Activated CD4-positive, alpha-beta T cell treated with anti-CD3 and anti-CD28 coated beads for 36 hours (primary cell): ENCODE measurements at regions of chr6 and their contacts with region 1.

Region 1: GRCh38 chr6:158869826-158870648 is 50.9 kb upstream of the EZR start:
- DNase-seq: peak; percentile 98
- ATAC-seq: peak; percentile 90
- H3K4me3 Mint-ChIP-seq: peak overlapping the region; percentile 75
- H3K27ac Mint-ChIP-seq: peak overlapping the region; percentile 95
- H3K4me1 Mint-ChIP-seq: peaks cover 37% of the 10 kb centered on the region
- H3K27me3 Mint-ChIP-seq: no peaks in the 10 kb centered on the region

Region 2: DNA sequence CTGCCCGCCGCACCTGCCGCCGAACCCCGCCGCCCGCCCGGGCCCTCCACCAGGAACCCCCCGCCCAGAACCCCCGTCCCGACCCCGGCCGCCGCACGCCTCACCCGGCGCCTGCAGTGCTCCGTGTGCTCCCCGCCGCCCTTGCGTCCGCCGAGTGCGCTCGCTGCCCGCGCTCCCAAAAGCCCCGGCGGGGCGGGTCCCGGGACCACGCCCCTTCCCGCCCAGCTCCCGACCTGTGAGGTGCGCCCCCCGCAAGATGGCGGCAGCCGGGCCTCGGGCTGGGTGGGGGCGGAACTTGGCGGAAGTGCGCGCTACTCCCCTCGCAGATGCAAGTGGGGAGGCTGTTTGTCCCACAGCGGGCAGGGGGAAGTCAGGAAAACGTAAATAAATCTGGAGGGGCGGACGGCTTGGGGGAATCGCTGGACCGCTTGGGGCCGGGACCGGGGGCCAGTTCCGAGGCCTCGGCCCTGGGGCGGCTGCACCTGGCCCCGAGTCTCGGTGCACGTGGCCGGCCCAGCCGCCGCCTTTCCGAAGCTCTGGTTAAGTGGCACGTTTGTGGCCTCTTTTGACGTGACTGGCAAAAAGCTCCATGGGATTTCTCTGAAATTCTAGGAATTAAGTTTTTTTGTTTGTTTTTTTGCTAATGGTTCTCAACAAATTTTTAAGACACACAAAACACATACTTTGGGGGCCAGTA is 50.7 kb before region 1 on chr6 and contains the start of gene EZR:
- CTCF ChIA-PET with region 1: interaction called, 9 read pairs
- POLR2A ChIA-PET with region 1: interaction called, 16 read pairs
- intact Hi-C with region 1: loop called (anchors 1 kb)
- DNase-seq: peak; percentile 91
- ATAC-seq: peak; percentile 52
- H3K4me3 Mint-ChIP-seq: peak within 1 kb of the TSS; percentile 93
- H3K27ac Mint-ChIP-seq: peak within 1 kb of the TSS; percentile 87
- H3K4me1 Mint-ChIP-seq: peaks cover 38% of the 10 kb centered on the region
- H3K27me3 Mint-ChIP-seq: no peaks in the 10 kb centered on the region
- total RNA-seq, gene EZR: 197 to 203 TPM

Region 3: GRCh38 chr6:158858915-158859314 is 11.1 kb before region 1 on chr6:
- CTCF ChIA-PET with region 1: interaction called, 22 read pairs
- POLR2A ChIA-PET with region 1: interaction called, 34 read pairs
- intact Hi-C with region 1: loop called in 1 of 2 experiments (anchors 1 kb)
- DNase-seq: no peak
- ATAC-seq: no peak
- H3K4me3 Mint-ChIP-seq: no peak overlapping the region
- H3K27ac Mint-ChIP-seq: no peak overlapping the region
- H3K4me1 Mint-ChIP-seq: peaks cover 10% of the 10 kb centered on the region
- H3K27me3 Mint-ChIP-seq: no peaks in the 10 kb centered on the region

Region 4: DNA sequence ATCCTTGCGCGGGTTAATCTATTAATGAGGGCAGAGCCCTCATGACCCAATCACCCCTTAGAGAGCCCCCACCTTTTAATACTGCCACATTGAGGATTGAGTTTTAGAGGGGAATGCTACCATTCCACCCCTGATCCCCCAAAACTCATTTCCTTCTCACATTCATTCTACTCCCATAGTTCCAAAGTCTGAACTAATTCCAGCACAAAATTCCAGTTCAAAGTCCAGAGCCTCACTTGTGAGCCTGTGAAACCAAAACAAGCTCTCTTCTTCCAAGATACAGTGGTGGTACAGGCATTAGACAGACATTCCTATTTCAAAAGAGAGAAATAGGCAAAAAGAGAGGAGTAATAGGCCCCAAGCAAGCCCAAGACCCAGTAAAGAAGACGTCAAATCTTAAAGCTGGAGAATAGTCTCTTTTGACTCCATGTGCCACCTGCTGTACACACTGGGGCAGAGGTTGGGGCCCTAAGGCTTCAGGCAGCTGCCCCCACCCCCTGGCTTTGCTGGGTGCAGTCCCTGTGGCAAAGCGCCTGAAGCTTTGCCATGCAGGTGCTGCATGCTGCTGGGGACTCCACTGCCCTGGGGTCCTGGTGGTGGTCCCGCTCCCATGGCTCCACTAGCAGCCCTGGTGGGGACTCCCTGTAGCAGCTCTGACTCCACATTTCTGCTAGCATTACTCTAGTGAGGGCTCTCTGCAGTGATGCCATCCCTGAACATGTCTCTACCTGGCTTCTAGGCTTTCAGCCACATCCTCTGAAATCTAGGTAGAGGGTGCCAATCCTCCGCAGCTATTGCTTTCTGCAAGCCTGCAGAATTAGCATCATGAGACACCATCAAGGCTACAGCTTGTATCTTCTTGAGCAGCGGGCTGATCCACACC is 88.7 kb after region 1 on chr6:
- CTCF ChIA-PET with region 1: no interaction called
- POLR2A ChIA-PET with region 1: interaction called, 3 read pairs
- intact Hi-C with region 1: loop called in 1 of 2 experiments (anchors 5 kb)
- DNase-seq: peak; percentile 40
- ATAC-seq: peak; percentile 44
- H3K4me3 Mint-ChIP-seq: no peak overlapping the region
- H3K27ac Mint-ChIP-seq: no peak overlapping the region
- H3K4me1 Mint-ChIP-seq: peaks cover 8% of the 10 kb centered on the region
- H3K27me3 Mint-ChIP-seq: no peaks in the 10 kb centered on the region

Region 5: DNA sequence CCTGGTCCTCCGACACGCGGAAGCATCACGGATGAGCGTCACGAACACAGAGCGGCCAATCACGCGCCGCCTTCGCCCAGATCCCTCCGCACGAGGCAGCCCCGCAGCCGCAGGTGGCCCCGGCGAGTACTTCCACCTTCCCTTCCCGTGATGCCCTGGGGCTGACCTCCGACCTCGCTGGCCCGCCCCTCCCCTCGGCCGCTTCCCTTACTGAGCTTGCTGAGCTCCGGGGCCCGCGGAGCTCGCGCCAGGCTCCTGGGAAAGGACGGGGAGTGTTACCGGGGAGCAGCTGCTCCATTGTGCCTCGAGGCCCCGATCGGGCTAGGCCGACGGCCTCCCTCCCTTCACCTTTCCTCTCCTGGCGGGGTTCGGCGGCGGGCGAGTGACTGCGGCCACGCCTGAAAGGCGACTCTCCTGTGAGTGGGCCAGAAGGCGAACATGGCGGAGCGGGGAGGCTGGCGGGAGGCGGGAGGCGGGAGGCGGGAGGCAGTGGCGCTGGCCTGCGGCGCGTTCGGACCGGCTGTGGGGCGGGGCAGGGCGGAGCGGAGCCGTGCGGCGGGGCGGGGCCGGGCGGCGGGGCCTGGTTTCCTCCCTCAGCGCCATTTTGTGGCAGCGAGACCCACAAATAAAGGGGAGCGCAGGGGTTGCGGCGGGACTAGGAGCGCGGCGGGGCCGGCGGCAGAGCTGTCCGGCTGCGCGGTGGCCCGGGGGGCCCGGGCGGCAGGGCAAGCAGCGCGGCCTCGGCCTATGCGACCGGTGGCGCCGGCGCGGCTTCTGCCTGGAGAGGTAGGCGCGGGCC is 857.1 kb after region 1 on chr6 and contains the start of gene WTAP:
- CTCF ChIA-PET with region 1: no interaction called
- POLR2A ChIA-PET with region 1: no interaction called
- intact Hi-C with region 1: loop called in 1 of 2 experiments (anchors 1 kb)
- DNase-seq: peak; percentile 99
- ATAC-seq: peak; percentile 91
- H3K4me3 Mint-ChIP-seq: peak within 1 kb of the TSS; percentile 95
- H3K27ac Mint-ChIP-seq: peak within 1 kb of the TSS; percentile 98
- H3K4me1 Mint-ChIP-seq: peaks cover 47% of the 10 kb centered on the region
- H3K27me3 Mint-ChIP-seq: no peaks in the 10 kb centered on the region
- total RNA-seq, gene WTAP: 87.2 to 91.5 TPM